ENCODE measurements at regions of chr6 and their contacts with region 1.

Region 1: DNA sequence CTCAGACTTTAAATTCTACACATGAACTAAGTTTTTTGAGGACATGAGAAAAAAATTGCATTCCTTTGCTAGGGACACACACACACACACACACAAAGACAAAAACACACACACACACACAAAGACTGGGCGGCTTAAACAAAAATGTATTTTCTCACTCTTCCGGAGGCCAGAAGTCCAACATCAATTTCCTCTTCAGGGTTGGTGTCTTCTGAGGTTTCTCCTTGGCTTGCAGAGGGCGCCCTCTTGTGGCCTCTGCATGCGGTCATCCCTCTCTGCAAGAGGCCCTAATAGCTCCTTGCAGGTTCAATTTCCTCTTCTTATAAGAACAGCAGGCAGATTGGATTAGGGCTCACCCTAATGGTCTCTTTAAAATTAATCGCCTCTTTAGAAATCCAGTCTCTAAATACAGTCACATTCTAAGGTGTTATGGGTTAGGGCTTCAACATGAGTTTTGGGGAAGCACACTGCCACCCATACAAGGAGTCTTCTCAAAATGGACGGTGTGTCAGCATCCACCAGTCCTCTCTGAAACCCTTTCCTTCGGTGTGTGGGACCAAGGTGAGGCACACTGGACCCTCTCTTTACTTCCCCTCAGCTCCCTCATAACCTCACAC is 61.4 kb downstream of the GPR6 start:
- DNase-seq: peak; percentile 90
- H3K4me3 Mint-ChIP-seq: peak overlapping the region; percentile 68
- H3K27ac Mint-ChIP-seq: peak overlapping the region; percentile 22
- H3K4me1 Mint-ChIP-seq: peaks cover 15% of the 10 kb centered on the region
- H3K27me3 Mint-ChIP-seq: no peaks in the 10 kb centered on the region
- CTCF ChIP-seq: peak; percentile 85

Region 2: DNA sequence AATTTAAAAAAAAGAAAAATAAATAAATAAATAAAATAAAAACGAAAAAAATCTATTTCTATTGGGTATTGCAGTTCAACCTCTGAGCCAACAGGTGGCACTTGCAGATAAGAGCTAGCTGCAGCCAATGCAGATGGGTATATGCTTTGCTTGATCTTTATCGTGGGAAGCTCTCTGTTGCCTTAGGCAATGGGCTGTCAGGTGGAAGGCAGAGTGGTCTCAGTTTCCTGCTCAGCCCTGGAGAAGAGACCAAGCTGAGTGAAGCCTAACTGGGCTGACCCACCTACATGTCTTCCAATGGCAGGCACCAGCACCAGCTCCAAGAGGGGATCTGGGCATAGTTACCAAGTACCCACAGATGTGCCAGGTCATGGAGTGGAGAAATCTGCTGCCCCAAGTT is 443.5 kb before region 1 on chr6:
- CTCF ChIA-PET with region 1: interaction called, 8 read pairs
- POLR2A ChIA-PET with region 1: no interaction called
- intact Hi-C with region 1: loop called (anchors 1 kb)
- DNase-seq: peak; percentile 30
- H3K4me3 Mint-ChIP-seq: no peak overlapping the region
- H3K27ac Mint-ChIP-seq: no peak overlapping the region
- H3K4me1 Mint-ChIP-seq: no peaks in the 10 kb centered on the region
- H3K27me3 Mint-ChIP-seq: no peaks in the 10 kb centered on the region
- CTCF ChIP-seq: peak; percentile 42

Region 3: GRCh38 chr6:109713097-109713496 is 326.4 kb before region 1 on chr6:
- CTCF ChIA-PET with region 1: interaction called, 113 read pairs
- POLR2A ChIA-PET with region 1: no interaction called
- intact Hi-C with region 1: no loop called
- DNase-seq: peak; percentile 14
- H3K4me3 Mint-ChIP-seq: no peak overlapping the region
- H3K27ac Mint-ChIP-seq: no peak overlapping the region
- H3K4me1 Mint-ChIP-seq: peaks cover 4% of the 10 kb centered on the region
- H3K27me3 Mint-ChIP-seq: no peaks in the 10 kb centered on the region
- CTCF ChIP-seq: no peak

Region 4: GRCh38 chr6:109788687-109789086 is 250.8 kb before region 1 on chr6:
- CTCF ChIA-PET with region 1: interaction called, 12 read pairs
- POLR2A ChIA-PET with region 1: interaction called, 3 read pairs
- intact Hi-C with region 1: no loop called
- DNase-seq: no peak
- H3K4me3 Mint-ChIP-seq: no peak overlapping the region
- H3K27ac Mint-ChIP-seq: no peak overlapping the region
- H3K4me1 Mint-ChIP-seq: peaks cover 8% of the 10 kb centered on the region
- H3K27me3 Mint-ChIP-seq: no peaks in the 10 kb centered on the region
- CTCF ChIP-seq: no peak

Region 5: DNA sequence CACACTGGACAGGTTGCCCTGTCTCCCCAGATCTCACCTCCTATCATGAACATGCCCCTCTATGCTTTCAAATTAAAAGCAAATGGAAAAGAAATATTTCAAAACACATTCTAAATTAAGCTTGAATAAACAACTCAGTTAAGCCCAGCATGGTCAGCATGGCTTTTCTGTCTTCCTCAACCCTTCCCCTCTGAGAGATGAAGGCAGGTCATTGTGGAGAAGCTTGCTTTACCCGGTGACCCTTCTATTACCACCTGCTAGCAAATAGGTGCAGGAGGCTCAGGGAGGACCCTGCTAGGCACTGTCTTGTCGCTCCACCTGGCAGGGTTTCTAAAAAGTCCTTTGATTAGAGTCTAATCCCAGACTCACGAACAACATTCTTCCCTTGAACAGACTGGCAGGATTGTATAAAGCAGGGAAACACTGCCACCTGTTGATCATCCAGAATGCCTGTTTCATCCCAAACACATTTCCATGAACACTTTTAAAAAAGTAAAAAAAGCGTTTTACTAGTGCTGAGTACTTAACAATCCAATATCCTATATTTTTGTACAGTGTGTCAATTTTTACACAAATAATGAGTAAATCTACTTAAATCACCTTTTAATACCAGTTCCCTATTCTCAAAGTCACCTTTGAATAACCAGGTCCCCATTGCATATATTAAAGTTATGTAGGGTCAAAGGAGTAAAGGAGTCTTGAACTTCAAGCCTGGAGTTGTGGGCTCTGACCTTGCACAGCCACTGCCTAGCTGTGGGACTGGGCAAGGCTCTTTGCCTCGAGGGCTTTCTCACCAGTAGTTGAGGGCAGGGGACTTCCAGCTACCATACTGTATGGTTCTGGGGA is 14.1 kb after region 1 on chr6:
- CTCF ChIA-PET with region 1: interaction called, 77 read pairs
- POLR2A ChIA-PET with region 1: no interaction called
- intact Hi-C with region 1: loop called (anchors 1 kb)
- DNase-seq: peak; percentile 71
- H3K4me3 Mint-ChIP-seq: no peak overlapping the region
- H3K27ac Mint-ChIP-seq: no peak overlapping the region
- H3K4me1 Mint-ChIP-seq: no peaks in the 10 kb centered on the region
- H3K27me3 Mint-ChIP-seq: peaks cover 11% of the 10 kb centered on the region
- CTCF ChIP-seq: peak; percentile 65

Region 6: DNA sequence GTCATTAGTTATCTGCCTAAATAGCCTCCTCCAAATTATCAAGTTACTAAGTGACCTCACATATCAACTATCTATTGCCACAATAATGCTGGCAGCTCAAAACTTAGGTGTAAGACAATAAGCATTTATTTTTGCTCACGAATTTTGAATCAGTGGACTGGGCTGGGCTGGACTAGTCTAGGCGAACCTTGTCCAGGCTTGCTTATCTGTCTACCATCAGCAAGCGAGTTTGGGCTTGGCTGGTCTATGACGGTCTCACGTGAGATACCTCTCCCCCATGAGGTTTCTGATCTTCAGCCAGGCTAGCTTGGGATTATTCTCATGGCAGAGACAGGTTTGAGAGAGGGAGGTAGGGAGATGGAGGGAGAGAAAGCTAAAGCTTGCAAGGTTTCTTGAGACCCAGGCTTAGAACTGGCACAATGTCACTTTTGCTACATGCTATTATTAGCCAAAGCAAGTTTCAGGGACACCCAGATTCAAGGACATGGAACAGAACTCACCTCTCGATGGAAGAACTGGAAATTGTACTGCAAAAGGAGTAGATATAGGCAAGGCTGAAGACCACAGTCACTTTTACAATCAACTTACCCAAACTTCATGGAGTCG is 59.1 kb after region 1 on chr6:
- CTCF ChIA-PET with region 1: interaction called, 27 read pairs
- POLR2A ChIA-PET with region 1: interaction called, 3 read pairs
- intact Hi-C with region 1: no loop called
- DNase-seq: peak; percentile 92
- H3K4me3 Mint-ChIP-seq: peak overlapping the region; percentile 47
- H3K27ac Mint-ChIP-seq: peak overlapping the region; percentile 85
- H3K4me1 Mint-ChIP-seq: peaks cover 47% of the 10 kb centered on the region
- H3K27me3 Mint-ChIP-seq: no peaks in the 10 kb centered on the region
- CTCF ChIP-seq: no peak

Measured in MCF 10A (cell line).